ENCODE measurements at regions of chr7 and their contacts with region 1.

Region 1: GRCh38 chr7:130010689-130011412 is 40.3 kb downstream of the ZC3HC1 start:
- DNase-seq: peak; percentile 84
- ATAC-seq: peak; percentile 73

Region 2: DNA sequence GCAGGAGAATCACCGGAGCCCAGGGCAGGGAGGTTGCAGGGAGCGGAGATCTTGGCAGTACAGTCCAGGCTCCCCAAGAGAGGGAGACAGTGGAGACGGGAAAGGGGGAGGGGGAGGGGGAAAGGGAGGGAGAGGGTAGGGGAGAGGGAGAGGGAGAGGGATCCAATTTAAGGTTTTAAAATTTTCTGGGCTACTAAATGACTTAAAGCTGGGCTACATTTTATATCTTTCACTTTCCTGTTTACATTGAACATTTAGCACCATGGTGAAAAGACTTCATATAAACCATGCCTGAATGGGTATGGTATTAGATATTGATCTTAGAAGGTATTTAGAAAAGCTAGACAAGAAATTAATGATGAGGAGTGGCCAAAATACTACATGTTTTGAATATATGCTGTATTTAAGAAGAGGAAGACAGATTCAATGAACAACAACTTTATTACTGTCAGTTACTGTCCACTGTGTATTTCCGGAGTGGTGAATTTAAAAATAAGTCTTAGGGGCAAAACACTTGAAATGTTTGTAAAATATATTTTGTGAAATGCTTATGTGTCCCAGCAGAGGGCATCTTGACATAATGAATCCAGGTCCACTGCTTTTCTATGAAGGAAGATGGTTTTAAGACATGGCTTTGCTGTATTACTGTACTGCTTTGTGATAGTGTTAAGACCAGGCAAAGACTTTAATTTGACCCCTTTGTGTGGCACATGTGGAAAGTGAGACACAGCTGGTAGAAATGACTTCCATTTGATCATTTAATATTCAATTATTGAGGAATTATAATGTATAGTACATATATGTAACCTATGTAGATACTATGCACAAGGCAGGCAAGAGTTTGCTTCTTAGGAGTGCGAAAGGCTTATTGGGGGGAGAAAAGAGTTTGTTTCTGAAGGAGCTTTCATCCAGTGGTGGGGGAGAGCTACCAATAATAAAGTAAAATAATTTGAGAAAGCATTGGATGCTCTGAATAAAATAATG is 346.5 kb before region 1 on chr7:
- intact Hi-C with region 1: loop called (anchors 10 kb)
- DNase-seq: no peak
- ATAC-seq: no peak